AG04450 (cell line): ENCODE measurements at regions of chr11 and their contacts with region 1.

Region 1: DNA sequence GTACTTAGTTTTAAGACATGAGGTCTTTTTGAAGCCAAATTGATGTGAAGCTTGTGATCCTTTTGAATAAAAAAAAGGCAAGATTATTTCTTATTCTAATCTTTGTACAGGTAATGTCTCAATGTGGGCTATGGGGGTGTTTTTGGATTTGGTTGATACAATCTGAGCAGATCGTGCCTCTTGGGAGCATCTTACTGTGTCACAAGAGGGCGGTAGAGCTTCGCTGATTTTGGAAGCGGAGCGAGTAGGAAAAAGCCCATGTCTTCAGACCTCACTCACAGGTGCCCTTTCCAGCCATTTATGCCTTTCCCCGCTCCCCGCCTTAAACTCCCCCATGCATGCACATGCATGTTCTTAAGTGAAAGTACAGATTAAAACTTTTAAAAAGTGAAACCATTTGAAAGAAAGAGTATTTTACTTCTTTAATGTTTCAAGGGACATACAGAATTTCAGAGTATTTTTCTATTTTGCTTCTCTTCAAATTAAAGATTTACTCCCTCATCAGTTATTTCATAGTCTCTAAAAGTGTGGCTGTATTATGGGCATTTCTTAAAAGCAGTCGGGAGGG is 18.8 kb downstream of the DDX25 start:
- DNase-seq: peak; percentile 38
- H3K4me3 ChIP-seq: no peak overlapping the region
- H3K27ac ChIP-seq: no peak overlapping the region
- H3K27me3 ChIP-seq: peaks cover 40% of the 10 kb centered on the region
- CTCF ChIP-seq: peak; percentile 96

Region 2: DNA sequence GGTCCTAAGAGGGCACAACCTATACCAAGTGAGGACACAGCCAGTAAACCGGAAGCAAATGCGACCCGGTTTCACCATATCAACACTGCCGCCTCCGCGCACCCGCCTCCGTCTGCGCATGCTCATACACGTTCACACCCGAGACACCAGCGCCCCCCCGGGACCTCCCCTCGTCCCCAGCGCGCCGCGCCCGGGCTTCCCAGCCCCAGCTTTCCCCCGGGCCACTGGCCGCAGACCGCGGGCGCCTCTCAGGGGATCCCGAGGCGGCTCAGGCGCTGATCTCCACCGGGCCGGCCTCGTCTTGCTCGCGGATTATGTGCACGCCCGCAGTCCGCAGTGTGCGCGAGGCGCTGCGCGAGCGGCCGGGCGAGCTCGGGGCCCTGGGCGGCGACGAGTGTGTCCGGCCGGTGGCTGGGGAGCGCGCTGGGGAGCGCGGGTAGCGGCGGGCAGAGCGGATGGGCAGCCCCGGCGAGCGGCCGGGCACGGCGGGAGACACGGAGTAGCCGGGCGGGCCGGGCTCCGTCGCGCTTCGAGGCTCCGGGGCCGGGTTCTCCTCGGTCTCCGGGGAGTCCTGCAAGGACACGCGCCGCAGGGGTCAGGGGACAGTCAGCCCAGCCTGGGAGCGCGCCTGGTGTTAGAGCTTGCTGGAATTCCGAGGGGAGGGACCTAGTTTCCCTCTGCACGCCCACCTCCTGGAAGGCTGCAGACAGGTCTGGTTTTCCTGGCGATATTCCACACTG is 1002.1 kb before region 1 on chr11:
- CTCF ChIA-PET with region 1: no interaction called
- POLR2A ChIA-PET with region 1: no interaction called
- DNase-seq: no peak
- H3K4me3 ChIP-seq: peak overlapping the region; percentile 48
- H3K27ac ChIP-seq: peak overlapping the region; percentile 39
- H3K27me3 ChIP-seq: no peaks in the 10 kb centered on the region
- CTCF ChIP-seq: no peak

Region 3: GRCh38 chr11:125910226-125910849 is 12.8 kb before region 1 on chr11:
- CTCF ChIA-PET with region 1: interaction called, 13 read pairs
- POLR2A ChIA-PET with region 1: no interaction called
- DNase-seq: no peak
- H3K4me3 ChIP-seq: no peak overlapping the region
- H3K27ac ChIP-seq: no peak overlapping the region
- H3K27me3 ChIP-seq: peaks cover 13% of the 10 kb centered on the region
- CTCF ChIP-seq: no peak

Region 4: GRCh38 chr11:125941619-125942611 is 18.8 kb after region 1 on chr11:
- CTCF ChIA-PET with region 1: interaction called, 10 read pairs
- POLR2A ChIA-PET with region 1: no interaction called
- DNase-seq: no peak
- H3K4me3 ChIP-seq: no peak overlapping the region
- H3K27ac ChIP-seq: no peak overlapping the region
- H3K27me3 ChIP-seq: peaks cover 22% of the 10 kb centered on the region
- CTCF ChIP-seq: peak; percentile 67

Region 5: GRCh38 chr11:126194121-126194543 is 271.0 kb after region 1 on chr11:
- CTCF ChIA-PET with region 1: interaction called, 166 read pairs
- POLR2A ChIA-PET with region 1: no interaction called
- DNase-seq: no peak
- H3K4me3 ChIP-seq: no peak overlapping the region
- H3K27ac ChIP-seq: no peak overlapping the region
- H3K27me3 ChIP-seq: no peaks in the 10 kb centered on the region
- CTCF ChIP-seq: peak; percentile 70

Region 6: GRCh38 chr11:126277780-126278179 is 354.7 kb after region 1 on chr11:
- CTCF ChIA-PET with region 1: no interaction called
- POLR2A ChIA-PET with region 1: no interaction called
- DNase-seq: no peak
- H3K4me3 ChIP-seq: no peak overlapping the region
- H3K27ac ChIP-seq: no peak overlapping the region
- H3K27me3 ChIP-seq: no peaks in the 10 kb centered on the region
- CTCF ChIP-seq: no peak